Motor neuron (in vitro differentiated cells): ENCODE measurements at regions of chr4 and their contacts with region 1.

Region 1: DNA sequence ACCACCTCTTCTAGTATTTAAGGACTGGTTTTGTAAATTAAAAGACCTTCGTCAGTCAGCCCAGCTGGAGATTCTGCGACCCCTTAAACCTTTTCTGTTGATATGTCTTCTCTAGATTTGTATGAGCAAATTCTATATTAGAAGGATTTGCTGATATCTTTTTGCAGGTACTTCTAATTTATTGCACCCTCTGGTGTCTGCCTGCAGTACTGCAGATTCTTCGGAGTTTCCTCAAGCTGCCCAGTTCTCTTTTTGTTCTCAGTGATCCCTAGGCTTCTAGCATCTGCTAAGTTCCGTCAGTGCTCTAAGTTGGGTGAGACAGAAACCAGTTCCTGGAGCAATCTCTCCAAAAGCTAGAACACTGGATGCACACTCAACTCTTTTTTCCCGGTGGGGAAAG is 545.2 kb downstream of the C4orf33 start:
- ATAC-seq: peak in 2 of 8 experiments; percentile 28 to 44
- H3K4me3 ChIP-seq: no peak overlapping the region
- H3K27ac ChIP-seq: no peak overlapping the region
- H3K4me1 ChIP-seq: no peaks in the 10 kb centered on the region

Region 2: DNA sequence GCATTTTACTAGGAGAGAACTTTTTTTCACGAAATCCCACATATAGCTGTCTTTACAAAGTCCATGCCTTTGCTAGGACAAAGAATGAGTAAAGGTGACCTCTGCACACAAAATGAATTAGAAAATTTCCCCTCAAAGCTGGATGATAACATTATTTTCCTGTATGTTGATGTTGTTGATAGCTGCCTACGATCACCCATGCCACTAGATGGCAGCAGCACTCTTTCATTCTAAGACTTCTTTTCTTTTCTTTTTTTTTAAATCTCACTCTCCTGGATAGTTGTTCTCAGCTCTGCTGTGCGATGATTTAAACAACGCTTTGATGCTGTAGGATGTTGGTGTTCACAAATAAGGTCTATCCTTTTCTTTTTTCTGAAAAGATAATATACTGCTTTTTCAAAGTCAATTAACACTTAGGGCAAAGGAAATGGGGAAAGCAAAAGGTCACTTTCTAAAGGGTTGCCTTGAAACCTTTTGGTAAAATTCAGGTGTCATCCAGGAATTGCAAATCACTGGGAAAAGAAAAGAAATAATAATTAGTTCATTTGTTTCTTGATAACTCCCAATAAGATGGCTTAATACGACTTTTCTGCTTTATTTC is 278.4 kb before region 1 on chr4:
- in situ Hi-C with region 1: loop called in 2 of 9 experiments (anchors 10 kb)
- ATAC-seq: peak; percentile 69 to 83 (median 76)
- H3K4me3 ChIP-seq: no peak overlapping the region
- H3K27ac ChIP-seq: no peak overlapping the region
- H3K4me1 ChIP-seq: peaks cover 0 to 7% of the 10 kb centered on the region in 2 donors

Region 3: DNA sequence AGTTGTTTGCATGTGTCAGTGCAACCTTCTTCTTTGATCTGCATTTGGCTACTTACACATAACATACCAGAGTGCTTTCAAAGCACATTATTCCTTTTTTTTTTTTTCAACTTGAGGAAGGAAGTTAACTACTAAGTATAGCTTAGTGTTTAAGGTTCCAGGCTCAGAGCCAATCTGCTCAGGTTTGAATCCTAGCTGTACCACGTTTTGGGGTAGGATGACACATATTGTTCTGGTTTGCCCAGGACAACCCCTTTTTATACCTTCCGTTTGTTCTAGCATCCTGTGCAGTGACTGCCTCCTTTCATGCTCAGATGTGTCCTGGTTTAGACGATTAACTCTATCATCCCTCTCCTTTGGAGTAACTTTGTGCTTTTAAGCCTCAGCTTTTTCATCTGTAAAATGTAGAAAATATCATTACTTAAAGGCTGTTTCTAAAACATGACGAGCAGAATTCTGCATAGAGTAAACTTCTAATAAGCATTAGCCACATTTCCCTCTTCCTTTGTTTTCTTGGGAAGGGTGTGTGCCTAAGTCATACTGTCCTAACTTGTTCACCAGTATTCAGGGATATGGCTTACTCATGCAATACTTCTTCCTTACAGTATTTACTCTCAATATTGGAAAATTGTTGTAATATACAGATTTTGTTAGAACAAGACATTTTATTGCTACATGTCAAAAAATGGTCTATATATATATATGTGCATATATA is 263.9 kb before region 1 on chr4:
- in situ Hi-C with region 1: loop called in 1 of 9 experiments (anchors 25 kb)
- ATAC-seq: no peak
- H3K4me3 ChIP-seq: no peak overlapping the region
- H3K27ac ChIP-seq: no peak overlapping the region
- H3K4me1 ChIP-seq: peaks cover 0 to 11% of the 10 kb centered on the region in 2 donors